ENCODE measurements at regions of chr1 and their contacts with region 1.

Region 1: DNA sequence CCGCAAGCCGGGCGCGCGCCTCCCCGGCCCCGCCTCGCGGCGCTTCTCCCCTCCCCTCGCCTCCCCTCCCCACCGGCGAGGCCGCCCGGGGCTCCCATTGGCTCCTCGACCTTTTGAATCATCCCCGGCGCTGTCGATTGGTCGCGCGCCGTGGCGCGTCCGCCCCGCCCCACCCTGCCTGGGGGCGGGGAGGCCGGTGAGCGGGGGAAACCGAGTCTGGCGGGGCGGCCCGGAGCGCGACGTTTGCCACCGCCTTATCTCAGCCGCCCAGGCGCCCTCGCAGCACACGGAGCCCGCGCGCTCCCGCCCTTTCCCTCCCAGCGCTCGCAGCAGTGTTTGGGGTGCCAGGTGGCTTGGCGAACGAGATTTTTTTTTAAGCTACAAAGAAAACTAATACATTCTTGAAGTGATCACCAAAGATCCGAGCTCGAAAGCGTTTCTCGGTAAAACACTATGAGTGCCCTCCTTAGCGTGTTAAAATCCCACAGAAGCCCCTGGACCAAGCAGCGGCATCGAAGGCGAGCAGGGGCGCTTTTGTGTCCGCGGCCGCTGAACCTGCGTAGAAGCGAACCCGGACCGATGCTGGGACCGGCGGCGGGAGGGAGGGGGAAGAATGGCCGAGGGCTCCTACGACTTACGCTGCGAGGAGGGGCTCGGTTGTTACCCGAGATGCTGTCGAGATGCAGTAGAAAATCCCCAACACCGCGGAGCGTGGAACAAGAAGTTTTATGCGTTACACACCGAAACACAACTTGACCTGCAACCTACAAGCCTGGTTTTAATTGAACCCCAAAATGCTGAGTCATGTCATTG is 436 bp upstream of the LBR start:
- DNase-seq: peak; percentile 94
- H3K4me3 Mint-ChIP-seq: peak overlapping the region; percentile 85
- H3K27ac Mint-ChIP-seq: peak overlapping the region; percentile 96
- H3K4me1 Mint-ChIP-seq: peaks cover 43% of the 10 kb centered on the region
- H3K27me3 Mint-ChIP-seq: no peaks in the 10 kb centered on the region

Region 2: DNA sequence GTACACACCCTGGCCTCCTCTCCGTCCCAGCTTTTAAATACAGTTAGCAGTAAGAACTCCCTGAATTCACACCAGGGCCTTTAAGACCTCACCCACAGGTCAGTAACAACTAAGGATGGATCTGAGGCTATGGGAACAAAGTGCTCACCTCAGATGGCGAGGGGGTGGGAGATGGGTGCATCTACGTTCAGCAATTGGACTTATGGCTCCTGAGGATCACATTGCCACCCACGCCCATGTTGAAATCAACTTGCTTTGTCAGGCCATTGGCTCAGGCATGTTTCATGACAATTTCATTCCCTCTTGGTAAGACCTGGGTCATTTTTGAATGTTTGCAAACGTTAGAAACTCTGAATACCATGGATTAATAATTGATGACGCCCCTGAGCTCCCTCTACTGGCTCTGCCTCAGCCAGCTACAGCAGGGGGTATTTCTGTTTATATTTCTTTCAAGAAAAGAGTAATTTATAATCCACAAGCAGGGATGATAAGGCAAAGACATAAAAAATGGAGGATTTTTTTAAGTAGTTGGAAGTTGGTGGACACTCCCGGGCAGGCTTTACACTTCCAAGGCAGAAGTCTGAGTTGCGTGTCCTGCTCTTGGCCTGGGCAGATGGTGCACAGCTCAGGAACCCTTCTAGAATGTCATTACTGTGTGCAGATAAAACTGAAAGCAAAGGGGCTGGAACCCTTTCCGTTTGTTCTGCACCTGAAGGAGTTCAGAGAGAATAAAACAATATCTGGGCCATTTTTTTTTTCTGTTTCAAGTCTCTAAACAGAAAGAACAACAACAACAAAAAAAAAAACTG is 13.2 kb after region 1 on chr1:
- CTCF ChIA-PET with region 1: interaction called, 11 read pairs
- intact Hi-C with region 1: loop called (anchors 1 kb)
- DNase-seq: no peak
- H3K4me3 Mint-ChIP-seq: peak overlapping the region; percentile 12
- H3K27ac Mint-ChIP-seq: peak overlapping the region; percentile 36
- H3K4me1 Mint-ChIP-seq: peaks cover 51% of the 10 kb centered on the region
- H3K27me3 Mint-ChIP-seq: no peaks in the 10 kb centered on the region

Region 3: GRCh38 chr1:225652729-225653462 is 224.6 kb after region 1 on chr1 and contains the start of gene ENAH:
- CTCF ChIA-PET with region 1: no interaction called
- intact Hi-C with region 1: loop called (anchors 5 kb)
- DNase-seq: peak; percentile 52
- H3K4me3 Mint-ChIP-seq: peak within 1 kb of the TSS; percentile 85
- H3K27ac Mint-ChIP-seq: peak within 1 kb of the TSS; percentile 50
- H3K4me1 Mint-ChIP-seq: peaks cover 10% of the 10 kb centered on the region
- H3K27me3 Mint-ChIP-seq: peaks cover 24% of the 10 kb centered on the region
- total RNA-seq, gene ENAH: 0.91 to 2.0 TPM

Measured in activated naive CD4-positive, alpha-beta T cell treated with anti-CD3 and anti-CD28 coated beads for 36 hours (primary cell).